ENCODE measurements at regions of chr3 and their contacts with region 1.

Region 1: GRCh38 chr3:86793786-86794185 is 197.2 kb downstream of the VGLL3 start:
- DNase-seq: peak; percentile 88
- H3K4me3 ChIP-seq: no peak overlapping the region
- H3K27ac ChIP-seq: peak overlapping the region; percentile 97
- H3K27me3 ChIP-seq: no peaks in the 10 kb centered on the region
- CTCF ChIP-seq: no peak

Region 2: GRCh38 chr3:85627932-85628331 is 1165.9 kb before region 1 on chr3:
- in situ Hi-C with region 1: no loop called
- DNase-seq: no peak
- H3K4me3 ChIP-seq: no peak overlapping the region
- H3K27ac ChIP-seq: no peak overlapping the region
- H3K27me3 ChIP-seq: no peaks in the 10 kb centered on the region
- CTCF ChIP-seq: no peak

Region 3: DNA sequence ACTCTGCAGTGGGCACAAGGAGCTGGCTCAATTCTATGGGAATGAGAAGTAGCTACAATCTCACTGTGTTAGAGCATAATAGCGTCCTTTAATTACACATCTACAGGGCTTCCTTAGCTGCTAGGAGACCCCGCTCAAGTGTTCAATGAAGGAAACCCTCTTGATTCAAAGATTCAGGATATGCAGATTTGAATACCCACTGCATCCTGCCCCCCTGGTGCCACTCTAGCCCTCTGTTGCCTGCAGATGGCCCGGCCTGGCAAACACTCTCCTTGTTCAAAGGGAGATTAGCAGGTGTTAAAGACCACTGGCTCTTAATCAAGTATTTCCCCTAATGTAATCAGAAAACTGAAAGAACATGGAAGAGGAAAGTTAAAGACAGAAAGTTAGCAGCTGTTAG is 159.4 kb before region 1 on chr3:
- in situ Hi-C with region 1: no loop called
- DNase-seq: no peak
- H3K4me3 ChIP-seq: no peak overlapping the region
- H3K27ac ChIP-seq: no peak overlapping the region
- H3K27me3 ChIP-seq: no peaks in the 10 kb centered on the region
- CTCF ChIP-seq: no peak

Region 4: GRCh38 chr3:86969500-86970189 is 175.9 kb after region 1 on chr3:
- in situ Hi-C with region 1: loop called (anchors 25 kb)
- DNase-seq: peak; percentile 68
- H3K4me3 ChIP-seq: no peak overlapping the region
- H3K27ac ChIP-seq: no peak overlapping the region
- H3K27me3 ChIP-seq: no peaks in the 10 kb centered on the region
- CTCF ChIP-seq: peak; percentile 80

Region 5: GRCh38 chr3:87082796-87083440 is 289.1 kb after region 1 on chr3:
- in situ Hi-C with region 1: loop called (anchors 25 kb)
- DNase-seq: peak; percentile 52
- H3K4me3 ChIP-seq: no peak overlapping the region
- H3K27ac ChIP-seq: no peak overlapping the region
- H3K27me3 ChIP-seq: no peaks in the 10 kb centered on the region
- CTCF ChIP-seq: peak; percentile 71

Measured in brain microvascular endothelial cell (primary cell).